Esophagus squamous epithelium (tissue), 5 donors: ENCODE measurements at regions of chr3 and their contacts with region 1.

Region 1: DNA sequence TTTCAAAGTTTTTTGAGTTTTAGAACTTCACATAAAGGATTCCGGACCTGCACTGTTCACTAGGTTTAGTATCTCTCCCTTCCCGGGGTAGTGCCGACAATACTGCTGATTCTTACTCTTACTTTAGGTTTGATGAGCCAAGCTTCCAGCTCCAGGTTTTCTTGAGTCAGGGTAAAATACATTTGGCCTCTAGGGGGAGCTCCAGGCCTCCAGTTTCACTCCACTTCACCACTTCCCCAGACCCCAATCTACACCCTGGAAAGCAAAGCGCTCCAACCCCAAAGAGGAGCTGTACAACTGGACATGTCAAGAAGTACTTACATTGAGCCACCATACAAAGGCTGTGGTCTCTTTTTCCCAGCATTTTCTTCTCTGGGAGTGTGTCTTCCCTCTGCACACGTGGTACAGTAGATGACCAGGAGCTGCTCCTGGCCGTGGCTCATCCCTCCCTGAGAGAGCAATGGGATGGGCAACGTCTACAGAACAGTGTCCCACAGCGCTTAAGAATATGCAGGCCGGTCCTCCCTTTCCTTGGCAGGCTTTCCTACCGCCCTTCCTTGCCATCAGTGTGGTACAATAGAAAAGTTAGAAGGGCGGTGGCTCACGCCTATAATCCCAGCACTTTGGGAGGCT is 93.9 kb upstream of the CCDC80 start:
- DNase-seq: no peak
- H3K4me3 ChIP-seq: no peak overlapping the region
- H3K27ac ChIP-seq: no peak overlapping the region
- H3K4me1 ChIP-seq: peaks cover 0 to 45% (median 5%) of the 10 kb centered on the region in 3 donors
- H3K27me3 ChIP-seq: no peaks in the 10 kb centered on the region
- CTCF ChIP-seq: peak; percentile 68 to 83 (median 75)
- POLR2A ChIP-seq: no peak

Region 2: GRCh38 chr3:112984485-112984884 is 249.7 kb after region 1 on chr3:
- intact Hi-C with region 1: loop called (anchors 10 kb)
- DNase-seq: no peak
- H3K4me3 ChIP-seq: no peak overlapping the region
- H3K27ac ChIP-seq: no peak overlapping the region
- H3K4me1 ChIP-seq: peaks cover 0 to 8% (median 0%) of the 10 kb centered on the region in 3 donors
- H3K27me3 ChIP-seq: no peaks in the 10 kb centered on the region
- CTCF ChIP-seq: no peak
- POLR2A ChIP-seq: no peak